SK-N-SH (cell line): ENCODE measurements at regions of chr5 and their contacts with region 1.

Region 1: GRCh38 chr5:132820162-132820754 is 7.2 kb downstream of the SOWAHA start:
- DNase-seq: peak; percentile 92
- H3K4me3 ChIP-seq: no peak overlapping the region; a peak in 1 of 4 replicates
- H3K27ac ChIP-seq: no peak overlapping the region
- H3K4me1 ChIP-seq: peaks cover 0 to 6% of the 10 kb centered on the region in 2 experiments; a peak in 1 of 4 replicates
- H3K27me3 ChIP-seq: no peaks in the 10 kb centered on the region
- CTCF ChIP-seq: peak; percentile 91
- EP300 ChIP-seq: no peak
- RAD21 ChIP-seq: peak; percentile 90

Region 2: GRCh38 chr5:132334812-132335211 is 485.4 kb before region 1 on chr5:
- CTCF ChIA-PET with region 1: no interaction called
- POLR2A ChIA-PET with region 1: no interaction called
- DNase-seq: no peak
- H3K4me3 ChIP-seq: no peak overlapping the region
- H3K27ac ChIP-seq: no peak overlapping the region
- H3K4me1 ChIP-seq: no peaks in the 10 kb centered on the region
- H3K27me3 ChIP-seq: no peaks in the 10 kb centered on the region
- CTCF ChIP-seq: no peak
- EP300 ChIP-seq: no peak
- RAD21 ChIP-seq: no peak

Region 3: GRCh38 chr5:132369474-132370180 is 450.6 kb before region 1 on chr5 and contains the start of gene SLC22A5:
- CTCF ChIA-PET with region 1: no interaction called
- POLR2A ChIA-PET with region 1: no interaction called
- DNase-seq: peak; percentile 95
- H3K4me3 ChIP-seq: peak within 1 kb of the TSS; percentile 65 to 66
- H3K27ac ChIP-seq: peak within 1 kb of the TSS in 1 of 2 experiments; percentile 80; a peak in 2 of 4 replicates
- H3K4me1 ChIP-seq: peaks cover 9 to 13% of the 10 kb centered on the region in 2 experiments; a peak in 2 of 4 replicates
- H3K27me3 ChIP-seq: no peaks in the 10 kb centered on the region
- CTCF ChIP-seq: no peak
- EP300 ChIP-seq: no peak
- RAD21 ChIP-seq: no peak
- polyA plus RNA-seq, gene SLC22A5: 8.3 and 12.3 TPM in 2 replicates

Region 4: DNA sequence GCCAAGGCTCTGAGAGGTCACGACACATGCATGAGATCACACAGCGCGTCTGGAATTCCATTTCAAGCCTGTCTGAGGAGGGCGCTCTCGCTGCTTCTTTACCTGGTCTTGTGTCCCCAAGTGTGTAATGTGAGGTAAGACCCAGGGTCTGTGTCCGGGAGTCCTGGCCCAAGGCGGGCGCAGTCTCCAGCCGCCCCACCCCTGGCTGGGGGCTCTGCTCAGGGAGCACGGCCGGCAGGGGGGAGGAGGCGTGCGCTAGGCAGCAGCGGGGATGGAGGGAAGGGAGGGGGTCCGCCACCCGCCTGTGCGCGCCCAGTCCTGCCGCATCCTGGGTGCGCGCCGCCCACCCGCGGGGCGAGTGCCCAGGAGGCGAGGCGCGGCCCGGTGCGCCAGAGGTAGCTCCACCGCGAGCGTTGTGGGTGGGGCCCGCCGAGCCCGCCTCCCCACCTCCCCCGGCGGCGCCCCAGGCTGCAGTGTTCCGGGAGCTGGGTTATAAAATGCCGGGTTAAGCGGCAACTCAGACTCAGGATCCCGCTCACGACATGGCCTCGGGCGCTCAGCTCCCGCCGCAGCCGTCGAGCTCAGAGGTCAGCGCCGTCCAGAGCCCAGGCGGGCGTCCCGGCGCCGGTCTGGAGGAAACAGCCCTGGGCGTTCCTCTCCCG is 73.2 kb before region 1 on chr5 and contains the start of gene CCNI2:
- CTCF ChIA-PET with region 1: interaction called, 98 read pairs
- POLR2A ChIA-PET with region 1: no interaction called
- DNase-seq: peak; percentile 87
- H3K4me3 ChIP-seq: peak within 1 kb of the TSS; percentile 49 to 51; a peak in 3 of 4 replicates
- H3K27ac ChIP-seq: no peak within 1 kb of the TSS
- H3K4me1 ChIP-seq: no peaks in the 10 kb centered on the region; a peak in 1 of 4 replicates
- H3K27me3 ChIP-seq: no peaks in the 10 kb centered on the region
- CTCF ChIP-seq: peak; percentile 54
- EP300 ChIP-seq: no peak
- RAD21 ChIP-seq: peak; percentile 53
- polyA plus RNA-seq, gene CCNI2: 0.05 and 0.34 TPM in 2 replicates

Region 5: DNA sequence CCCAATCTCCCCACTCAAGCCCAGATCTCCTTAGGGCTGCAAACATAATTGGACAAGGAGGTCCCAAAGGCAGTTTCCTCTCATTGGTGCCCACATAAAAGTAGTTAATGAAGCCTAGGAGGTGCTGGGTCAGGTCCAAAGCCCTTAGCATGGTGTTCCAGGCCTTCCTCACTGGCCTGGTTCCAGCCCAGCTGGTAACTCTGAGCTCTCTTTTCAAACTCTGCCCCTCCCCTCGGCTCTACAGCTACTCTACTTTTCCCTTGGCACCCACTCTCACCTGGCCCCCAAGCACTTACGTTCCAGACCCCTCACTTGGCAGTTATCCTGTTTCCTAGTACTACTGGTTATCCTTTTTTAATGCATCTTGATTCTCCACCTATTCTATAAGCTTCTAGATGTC is 53.1 kb before region 1 on chr5:
- CTCF ChIA-PET with region 1: interaction called, 16 read pairs
- POLR2A ChIA-PET with region 1: no interaction called
- DNase-seq: no peak
- H3K4me3 ChIP-seq: no peak overlapping the region
- H3K27ac ChIP-seq: no peak overlapping the region
- H3K4me1 ChIP-seq: peaks cover 8 to 11% of the 10 kb centered on the region in 2 experiments; a peak in 2 of 4 replicates
- H3K27me3 ChIP-seq: no peaks in the 10 kb centered on the region
- CTCF ChIP-seq: no peak
- EP300 ChIP-seq: no peak
- RAD21 ChIP-seq: no peak

Region 6: DNA sequence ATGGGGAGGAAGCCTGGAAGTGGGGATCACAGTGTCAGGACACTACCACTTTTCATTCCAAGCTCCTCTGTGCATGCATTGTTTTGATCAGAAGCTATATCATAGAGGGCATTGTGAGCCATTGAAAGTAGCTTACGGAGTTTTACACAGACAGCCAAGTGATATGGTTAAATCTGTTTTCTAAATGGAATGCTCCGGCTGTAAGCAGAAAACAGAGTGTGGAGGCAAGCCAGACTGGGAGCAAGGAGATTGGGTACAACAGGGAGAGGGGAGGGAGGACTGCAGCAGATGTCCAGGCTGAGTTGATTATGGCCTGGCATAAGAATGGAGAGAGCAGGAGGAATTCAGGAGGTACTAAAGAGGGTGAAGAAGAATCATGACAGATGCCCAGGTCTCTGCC is 22.6 kb before region 1 on chr5:
- CTCF ChIA-PET with region 1: interaction called, 18 read pairs
- POLR2A ChIA-PET with region 1: no interaction called
- DNase-seq: no peak
- H3K4me3 ChIP-seq: no peak overlapping the region
- H3K27ac ChIP-seq: no peak overlapping the region
- H3K4me1 ChIP-seq: peaks cover 0 to 5% of the 10 kb centered on the region in 2 experiments; a peak in 1 of 4 replicates
- H3K27me3 ChIP-seq: no peaks in the 10 kb centered on the region
- CTCF ChIP-seq: no peak
- EP300 ChIP-seq: no peak
- RAD21 ChIP-seq: no peak

Region 7: GRCh38 chr5:132866342-132867045 is 46.2 kb after region 1 on chr5 and contains the starts of genes GDF9 and UQCRQ:
- CTCF ChIA-PET with region 1: interaction called, 10 read pairs
- POLR2A ChIA-PET with region 1: no interaction called
- DNase-seq: peak; percentile 96
- H3K4me3 ChIP-seq: peak within 1 kb of the TSS; percentile 78 to 99
- H3K27ac ChIP-seq: peak within 1 kb of the TSS; percentile 73 to 92
- H3K4me1 ChIP-seq: peaks cover 7 to 14% of the 10 kb centered on the region in 2 experiments; a peak in 3 of 4 replicates
- H3K27me3 ChIP-seq: no peaks in the 10 kb centered on the region
- CTCF ChIP-seq: peak; percentile 46
- EP300 ChIP-seq: peak in 1 of 2 experiments; percentile 32; a peak in 1 of 4 replicates
- RAD21 ChIP-seq: peak; percentile 62
- polyA plus RNA-seq, gene GDF9: 0.82 and 1.2 TPM in 2 replicates
- polyA plus RNA-seq, gene UQCRQ: 510 and 694 TPM in 2 replicates